Heart right ventricle (tissue), 16 donors: ENCODE measurements at regions of chr13 and their contacts with region 1.

Region 1: DNA sequence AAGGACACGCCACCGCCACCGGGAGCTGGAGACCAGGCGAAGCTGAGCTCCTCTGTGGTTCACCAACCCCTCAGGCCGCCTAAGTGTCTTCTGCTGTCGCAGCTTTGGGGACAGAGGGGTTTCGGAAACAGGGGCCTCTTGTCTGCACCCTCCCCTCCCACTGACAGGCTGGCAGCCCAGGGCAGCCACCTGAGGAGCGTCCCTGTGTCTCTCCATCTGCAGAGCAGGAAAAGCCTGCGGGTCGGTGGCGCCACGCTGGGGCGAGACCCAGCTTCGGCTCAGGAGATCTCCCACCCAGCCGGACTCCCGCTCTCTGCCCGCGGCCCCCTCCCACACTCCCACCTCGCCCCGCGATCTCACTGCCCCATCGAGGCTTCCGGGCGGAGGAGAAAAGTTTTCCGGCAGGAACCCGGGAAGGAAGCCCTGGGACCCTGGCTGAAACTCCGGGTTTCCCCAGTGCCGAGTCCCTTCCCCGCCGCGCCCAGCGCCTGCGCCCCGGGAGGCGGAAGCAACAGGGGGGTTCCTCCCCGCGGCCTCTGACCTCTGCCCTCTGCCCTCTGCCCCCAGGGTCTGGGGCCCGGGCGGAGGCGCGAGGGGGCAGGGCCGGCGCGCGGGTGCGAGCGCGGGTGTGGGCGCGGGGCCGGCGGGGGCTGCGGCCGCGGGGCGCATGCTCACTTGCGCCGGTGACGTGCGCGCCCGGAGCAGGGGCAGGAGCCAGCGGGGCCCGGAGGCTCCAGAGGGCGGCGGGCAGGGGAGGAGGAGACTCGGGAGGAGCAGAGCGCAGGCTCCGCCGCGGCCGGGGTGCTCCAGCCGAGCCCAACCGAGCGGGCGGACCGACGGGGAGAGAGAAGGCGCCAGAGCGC is at the start of gene ATP11A:
- DNase-seq: peak; percentile 93 to 96
- ATAC-seq: peak; percentile 81 to 91 (median 88)
- H3K4me3 ChIP-seq: peak within 1 kb of the TSS; percentile 73 to 100 (median 88)
- H3K27ac ChIP-seq: peak within 1 kb of the TSS; percentile 80 to 97 (median 94)
- H3K4me1 ChIP-seq: peaks cover 8 to 53% (median 41%) of the 10 kb centered on the region in 9 donors
- H3K27me3 ChIP-seq: no peaks in the 10 kb centered on the region
- CTCF ChIP-seq: peak in 3 of 9 donors; percentile 35 to 39 (median 36)
- total RNA-seq, gene ATP11A: 81.1 to 164 (median 118) TPM

Region 2: DNA sequence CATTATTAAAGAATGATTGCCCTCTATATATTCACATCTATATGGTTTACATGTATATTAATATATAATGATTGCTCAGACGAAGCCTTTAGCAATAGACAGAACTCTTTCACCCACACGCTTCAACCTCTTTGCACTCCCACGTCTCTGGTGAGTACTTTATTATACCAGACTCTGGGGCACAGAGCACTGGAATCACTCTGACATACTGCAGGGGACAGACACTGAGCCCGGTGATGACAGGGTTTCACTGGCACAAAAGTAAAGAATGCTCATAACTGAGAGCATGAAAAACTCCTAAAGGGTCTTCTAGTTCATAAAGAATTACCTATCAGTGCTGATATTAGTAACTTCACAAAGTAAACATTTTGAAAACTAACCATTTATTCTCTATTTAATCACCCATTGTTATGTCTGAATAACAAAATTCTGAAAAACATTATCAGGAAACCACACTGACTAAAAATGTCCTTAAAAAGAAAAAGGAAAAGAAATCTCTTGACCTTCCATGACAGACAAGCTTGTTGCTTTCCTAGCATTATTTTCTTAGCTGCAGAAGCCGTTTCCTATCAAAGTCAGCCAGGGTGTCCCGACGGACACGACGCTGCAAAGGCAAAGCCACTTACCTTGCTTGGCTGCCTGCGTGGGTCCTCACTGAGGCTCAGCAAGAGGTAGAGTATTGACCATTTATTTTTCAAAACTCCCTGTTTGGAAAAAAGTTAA is 130.7 kb before region 1 on chr13:
- intact Hi-C with region 1: no loop called
- DNase-seq: no peak
- ATAC-seq: no peak
- H3K4me3 ChIP-seq: no peak overlapping the region
- H3K27ac ChIP-seq: peak overlapping the region in 1 of 10 donors; percentile 6
- H3K4me1 ChIP-seq: peaks cover 0 to 39% (median 7%) of the 10 kb centered on the region in 9 donors
- H3K27me3 ChIP-seq: no peaks in the 10 kb centered on the region
- CTCF ChIP-seq: no peak

Region 3: GRCh38 chr13:112638157-112638750 is 51.3 kb before region 1 on chr13:
- intact Hi-C with region 1: loop called in 2 of 10 experiments (anchors 5 kb)
- DNase-seq: no peak
- ATAC-seq: no peak
- H3K4me3 ChIP-seq: no peak overlapping the region
- H3K27ac ChIP-seq: no peak overlapping the region
- H3K4me1 ChIP-seq: peaks cover 0 to 16% (median 0%) of the 10 kb centered on the region in 9 donors
- H3K27me3 ChIP-seq: peaks cover 0 to 58% (median 49%) of the 10 kb centered on the region in 7 donors
- CTCF ChIP-seq: no peak

Region 4: DNA sequence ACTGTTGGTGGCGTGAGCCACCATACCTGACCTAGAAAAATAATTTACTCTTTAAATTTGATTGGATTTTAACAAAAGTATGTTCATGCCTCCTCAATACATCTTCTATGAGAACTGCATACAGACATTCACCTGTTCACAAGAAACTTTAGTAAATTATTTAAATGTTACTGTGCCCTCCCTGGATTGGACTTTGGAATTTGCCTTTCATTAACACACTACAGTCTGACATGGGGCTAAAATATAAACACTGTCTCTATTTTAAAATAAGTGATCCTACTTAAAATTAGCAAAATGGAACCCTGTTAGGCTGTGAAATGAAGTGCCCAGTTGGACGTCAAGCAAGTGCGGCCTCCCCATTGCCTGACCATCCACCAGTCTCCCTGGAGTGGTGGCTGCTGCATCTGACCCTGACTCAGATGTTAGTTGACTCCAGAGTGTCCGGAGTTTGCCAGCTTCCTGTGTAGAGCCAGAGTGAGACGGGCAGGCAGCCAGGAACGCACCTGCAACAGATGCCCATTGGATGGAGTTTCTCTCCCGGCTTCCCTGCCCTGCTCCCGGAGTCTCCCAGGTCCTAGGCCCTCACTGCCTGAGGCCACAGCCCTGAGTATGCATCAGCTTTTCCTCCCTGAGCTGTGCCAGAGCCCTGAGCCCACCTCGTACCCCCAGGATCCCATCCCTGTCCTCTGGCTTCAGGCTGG is 45.6 kb before region 1 on chr13:
- intact Hi-C with region 1: loop called in 2 of 10 experiments (anchors 5 kb)
- DNase-seq: no peak
- ATAC-seq: no peak
- H3K4me3 ChIP-seq: no peak overlapping the region
- H3K27ac ChIP-seq: no peak overlapping the region
- H3K4me1 ChIP-seq: peaks cover 0 to 16% (median 0%) of the 10 kb centered on the region in 9 donors
- H3K27me3 ChIP-seq: peaks cover 0 to 18% (median 12%) of the 10 kb centered on the region in 7 donors
- CTCF ChIP-seq: no peak

Region 5: GRCh38 chr13:112725346-112726015 is 35.9 kb after region 1 on chr13:
- intact Hi-C with region 1: loop called in 6 of 10 experiments (anchors 1 to 5 kb)
- DNase-seq: peak in 1 of 2 donors; percentile 45
- ATAC-seq: peak in 7 of 8 donors; percentile 30 to 62 (median 45)
- H3K4me3 ChIP-seq: peak overlapping the region in 3 of 10 donors; percentile 5 to 28 (median 15)
- H3K27ac ChIP-seq: peak overlapping the region in 9 of 10 donors; percentile 33 to 92 (median 86)
- H3K4me1 ChIP-seq: peaks cover 17 to 93% (median 72%) of the 10 kb centered on the region in 9 donors
- H3K27me3 ChIP-seq: no peaks in the 10 kb centered on the region
- CTCF ChIP-seq: no peak

Region 6: DNA sequence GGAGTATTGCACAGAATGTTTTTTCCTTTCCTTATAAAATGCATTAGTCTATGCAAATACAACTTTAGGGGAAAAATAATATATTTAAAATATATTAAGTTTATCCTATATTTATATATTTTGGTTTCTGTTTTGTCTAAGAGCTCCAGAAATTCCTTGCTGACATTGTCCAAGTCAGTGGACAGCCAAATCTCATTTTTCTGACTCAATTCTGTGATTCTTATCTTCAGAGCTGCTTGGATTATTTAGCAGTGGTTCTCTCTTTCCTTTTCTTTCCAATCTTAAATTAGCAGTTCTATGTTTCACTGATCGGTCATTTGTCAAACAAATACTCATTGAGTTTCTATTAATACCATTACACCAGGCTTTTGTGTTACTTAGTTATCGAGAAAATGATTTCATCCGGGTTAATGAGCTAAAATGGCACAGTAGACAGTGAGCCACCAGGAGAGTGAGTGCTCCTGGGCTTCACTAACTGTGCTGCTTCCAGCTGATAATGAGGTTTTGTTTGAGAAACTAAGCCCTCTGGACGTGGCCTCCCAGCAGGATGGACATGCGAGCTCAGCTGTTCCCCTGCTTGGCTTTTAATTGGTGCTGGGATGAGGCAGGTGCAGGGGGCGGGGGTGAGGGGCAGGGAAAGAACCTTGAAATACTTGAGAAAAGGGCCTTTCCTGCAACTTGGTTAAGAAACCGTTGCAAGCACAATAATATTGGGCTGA is 44.3 kb after region 1 on chr13:
- intact Hi-C with region 1: loop called in 6 of 10 experiments (anchors 5 kb)
- DNase-seq: no peak
- ATAC-seq: no peak
- H3K4me3 ChIP-seq: no peak overlapping the region
- H3K27ac ChIP-seq: peak overlapping the region in 6 of 10 donors; percentile 24 to 65 (median 49)
- H3K4me1 ChIP-seq: peaks cover 7 to 63% (median 35%) of the 10 kb centered on the region in 9 donors
- H3K27me3 ChIP-seq: no peaks in the 10 kb centered on the region
- CTCF ChIP-seq: no peak

Region 7: DNA sequence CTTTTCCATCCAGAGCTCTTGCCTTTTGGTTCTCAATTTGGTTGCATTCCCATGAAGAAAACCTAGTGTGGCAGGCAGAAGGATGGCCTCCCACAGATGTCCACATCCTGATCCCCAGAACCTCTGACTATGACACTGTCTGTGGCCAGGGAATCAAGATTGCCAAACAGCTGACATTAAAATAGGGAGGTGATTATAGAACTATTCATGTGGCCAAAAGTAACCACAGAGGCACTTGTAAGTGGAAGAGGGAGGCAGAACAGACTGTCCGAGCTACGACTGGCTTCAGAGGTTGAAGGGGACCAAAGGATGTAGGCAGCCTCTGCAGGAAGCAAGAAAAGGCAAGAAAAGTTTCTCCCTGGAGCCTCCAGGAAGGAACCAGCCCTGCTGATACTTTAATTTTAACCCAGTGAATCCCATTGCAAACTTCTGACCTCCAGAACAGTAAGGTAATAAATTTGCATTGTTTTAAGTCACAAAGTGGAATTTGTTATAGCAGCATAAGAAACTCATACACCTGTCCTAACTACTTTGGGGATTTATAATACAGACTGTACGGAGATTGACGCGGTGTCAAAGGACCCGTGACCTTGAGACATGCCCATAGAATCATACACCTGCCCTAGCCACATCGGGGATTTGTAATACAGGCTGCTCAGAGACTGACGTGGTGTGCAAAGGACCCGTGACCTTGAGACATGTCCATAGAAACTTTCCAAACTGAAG is 106.8 kb after region 1 on chr13:
- intact Hi-C with region 1: loop called in 1 of 10 experiments (anchors 5 kb)
- DNase-seq: no peak
- ATAC-seq: peak in 4 of 8 donors; percentile 43 to 54 (median 52)
- H3K4me3 ChIP-seq: no peak overlapping the region
- H3K27ac ChIP-seq: no peak overlapping the region
- H3K4me1 ChIP-seq: peaks cover 0 to 30% (median 8%) of the 10 kb centered on the region in 9 donors
- H3K27me3 ChIP-seq: no peaks in the 10 kb centered on the region
- CTCF ChIP-seq: no peak

Region 8: GRCh38 chr13:113001241-113002140 is 312.0 kb after region 1 on chr13:
- intact Hi-C with region 1: no loop called
- DNase-seq: no peak
- ATAC-seq: peak; percentile 8 to 77 (median 62)
- H3K4me3 ChIP-seq: peak overlapping the region in 9 of 10 donors; percentile 21 to 56 (median 42)
- H3K27ac ChIP-seq: peak overlapping the region in 6 of 10 donors; percentile 23 to 47 (median 40)
- H3K4me1 ChIP-seq: peaks cover 14 to 73% (median 54%) of the 10 kb centered on the region in 9 donors
- H3K27me3 ChIP-seq: peaks cover 0 to 24% (median 0%) of the 10 kb centered on the region in 7 donors
- CTCF ChIP-seq: no peak